ENCODE measurements at regions of chr11 and their contacts with region 1.

Region 1: DNA sequence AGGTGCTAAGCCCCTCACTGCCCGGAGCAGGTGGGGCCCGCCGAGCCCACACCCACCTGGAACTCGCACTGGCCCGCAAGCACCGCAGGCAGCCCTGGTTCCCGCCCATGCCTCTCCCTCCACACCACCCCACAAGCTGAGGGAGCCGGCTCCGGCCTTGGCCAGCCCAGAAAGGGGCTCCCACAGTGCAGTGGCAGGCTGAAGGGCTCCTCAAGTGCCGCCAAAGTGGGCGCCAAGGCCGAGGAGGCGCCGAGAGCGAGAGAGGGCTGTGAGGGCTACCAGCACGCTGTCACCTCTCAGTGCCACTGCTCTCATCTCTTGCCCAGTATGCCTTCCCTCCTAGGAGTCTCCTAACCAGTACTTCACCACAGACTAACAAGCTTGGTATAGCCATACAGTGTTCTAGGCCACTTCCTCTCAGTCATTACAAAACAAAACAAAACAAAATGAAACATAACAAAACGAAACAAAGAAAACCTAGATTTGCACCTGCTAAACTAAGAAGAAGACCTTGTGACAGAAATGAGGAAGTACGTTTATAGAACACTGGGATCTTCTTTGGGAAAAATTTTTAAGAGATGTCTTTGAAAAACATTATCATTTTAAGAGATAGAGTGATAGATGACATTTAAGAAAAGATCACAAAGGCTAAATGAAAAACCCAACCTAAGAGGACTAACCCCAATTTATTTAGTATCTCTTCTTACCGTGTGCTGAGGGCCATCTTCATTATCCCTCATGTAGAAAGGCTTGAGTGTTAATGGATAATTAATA is 47.7 kb upstream of the GAB2 start:
- DNase-seq: peak; percentile 81
- ATAC-seq: peak; percentile 89
- H3K4me3 ChIP-seq: peak overlapping the region in 3 of 5 experiments; percentile 16 to 34 (median 20)
- H3K4me3 Mint-ChIP-seq: peak overlapping the region; percentile 72
- H3K27ac ChIP-seq: peak overlapping the region; percentile 90 to 92
- H3K27ac Mint-ChIP-seq: peak overlapping the region; percentile 95
- H3K4me1 ChIP-seq: peaks cover 26 to 27% of the 10 kb centered on the region in 2 donors
- H3K4me1 Mint-ChIP-seq: peaks cover 44% of the 10 kb centered on the region
- H3K27me3 ChIP-seq: no peaks in the 10 kb centered on the region
- H3K27me3 Mint-ChIP-seq: no peaks in the 10 kb centered on the region
- CTCF ChIP-seq: no peak

Region 2: GRCh38 chr11:78432058-78432515 is 33.3 kb before region 1 on chr11:
- CTCF ChIA-PET with region 1: interaction called, 13 read pairs
- POLR2A ChIA-PET with region 1: no interaction called
- intact Hi-C with region 1: no loop called
- DNase-seq: peak; percentile 44
- ATAC-seq: no peak
- H3K4me3 ChIP-seq: no peak overlapping the region
- H3K4me3 Mint-ChIP-seq: no peak overlapping the region
- H3K27ac ChIP-seq: no peak overlapping the region
- H3K27ac Mint-ChIP-seq: peak overlapping the region; percentile 20
- H3K4me1 ChIP-seq: peaks cover 34 to 38% of the 10 kb centered on the region in 2 donors
- H3K4me1 Mint-ChIP-seq: peaks cover 42% of the 10 kb centered on the region
- H3K27me3 ChIP-seq: no peaks in the 10 kb centered on the region
- H3K27me3 Mint-ChIP-seq: no peaks in the 10 kb centered on the region
- CTCF ChIP-seq: peak; percentile 72

Region 3: GRCh38 chr11:78533399-78533798 is 68.0 kb after region 1 on chr11:
- CTCF ChIA-PET with region 1: no interaction called
- POLR2A ChIA-PET with region 1: no interaction called
- intact Hi-C with region 1: loop called (anchors 2 kb)
- DNase-seq: peak; percentile 68
- ATAC-seq: peak; percentile 69
- H3K4me3 ChIP-seq: peak overlapping the region in 1 of 5 experiments; percentile 55
- H3K4me3 Mint-ChIP-seq: peak overlapping the region; percentile 29
- H3K27ac ChIP-seq: peak overlapping the region; percentile 69 to 90
- H3K27ac Mint-ChIP-seq: peak overlapping the region; percentile 87
- H3K4me1 ChIP-seq: peaks cover 20 to 28% of the 10 kb centered on the region in 2 donors
- H3K4me1 Mint-ChIP-seq: peaks cover 34% of the 10 kb centered on the region
- H3K27me3 ChIP-seq: no peaks in the 10 kb centered on the region
- H3K27me3 Mint-ChIP-seq: no peaks in the 10 kb centered on the region
- CTCF ChIP-seq: no peak